K562 (cell line): ENCODE measurements at regions of chr2 and their contacts with region 1.

Region 1: GRCh38 chr2:43595603-43596412 is at the start of gene THADA:
- DNase-seq: peak; percentile 96 to 99 (median 98)
- ATAC-seq: peak; percentile 98
- H3K4me3 ChIP-seq: peak within 1 kb of the TSS; percentile 58
- H3K27ac ChIP-seq: peak within 1 kb of the TSS; percentile 99
- H3K4me1 ChIP-seq: peaks cover 4 to 10% of the 10 kb centered on the region in 2 experiments; a peak in 1 of 5 replicates
- H3K27me3 ChIP-seq: no peaks in the 10 kb centered on the region
- CTCF ChIP-seq: peak in 1 of 3 experiments; percentile 1; a peak in 1 of 6 replicates
- EP300 ChIP-seq: no peak
- POLR2A ChIP-seq: peak; percentile 99
- RAD21 ChIP-seq: no peak
- polyA plus RNA-seq, gene THADA: 17.8 to 29.6 TPM

Region 2: DNA sequence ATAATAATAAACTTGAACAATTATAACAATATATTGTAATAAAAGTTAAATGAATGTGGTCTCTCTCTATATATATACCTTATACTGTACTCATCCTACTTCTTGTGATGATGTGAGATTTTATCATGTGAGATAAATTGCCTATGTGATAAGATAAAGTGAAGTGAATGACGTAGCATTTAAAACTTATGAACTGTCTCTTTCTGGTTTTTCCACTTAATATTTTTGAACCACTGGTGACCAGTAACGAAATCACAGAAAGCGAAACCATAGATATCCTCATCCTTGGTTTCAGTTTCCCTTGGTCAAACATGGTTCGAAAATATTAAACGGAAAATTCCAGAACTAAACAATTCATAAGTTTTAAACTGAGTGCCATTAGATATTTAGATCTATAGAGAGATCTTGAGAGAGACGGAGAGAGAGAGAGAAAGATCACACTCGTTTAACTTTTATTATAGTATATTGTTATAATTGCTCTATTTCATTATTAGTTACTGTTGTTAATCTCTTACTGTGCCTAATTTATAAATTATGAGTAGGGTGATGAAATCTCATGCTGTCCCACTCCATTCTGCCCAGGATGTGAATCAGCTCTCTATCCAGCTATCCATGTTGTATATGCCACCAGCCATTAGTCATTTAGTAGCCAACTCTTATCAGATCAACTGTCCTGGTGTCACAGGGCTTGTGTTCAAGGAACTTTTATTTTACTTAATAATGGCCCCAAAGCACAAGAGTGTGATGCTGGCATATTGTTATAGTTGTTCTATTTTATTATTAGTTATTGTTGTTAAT is 156.8 kb before region 1 on chr2:
- CTCF ChIA-PET with region 1: no interaction called
- POLR2A ChIA-PET with region 1: no interaction called
- in situ Hi-C with region 1: no loop called
- intact Hi-C with region 1: no loop called
- DNase-seq: no peak
- ATAC-seq: no peak
- H3K4me3 ChIP-seq: no peak overlapping the region
- H3K27ac ChIP-seq: no peak overlapping the region
- H3K4me1 ChIP-seq: no peaks in the 10 kb centered on the region
- H3K27me3 ChIP-seq: no peaks in the 10 kb centered on the region
- CTCF ChIP-seq: no peak
- EP300 ChIP-seq: no peak
- POLR2A ChIP-seq: no peak
- RAD21 ChIP-seq: no peak

Region 3: DNA sequence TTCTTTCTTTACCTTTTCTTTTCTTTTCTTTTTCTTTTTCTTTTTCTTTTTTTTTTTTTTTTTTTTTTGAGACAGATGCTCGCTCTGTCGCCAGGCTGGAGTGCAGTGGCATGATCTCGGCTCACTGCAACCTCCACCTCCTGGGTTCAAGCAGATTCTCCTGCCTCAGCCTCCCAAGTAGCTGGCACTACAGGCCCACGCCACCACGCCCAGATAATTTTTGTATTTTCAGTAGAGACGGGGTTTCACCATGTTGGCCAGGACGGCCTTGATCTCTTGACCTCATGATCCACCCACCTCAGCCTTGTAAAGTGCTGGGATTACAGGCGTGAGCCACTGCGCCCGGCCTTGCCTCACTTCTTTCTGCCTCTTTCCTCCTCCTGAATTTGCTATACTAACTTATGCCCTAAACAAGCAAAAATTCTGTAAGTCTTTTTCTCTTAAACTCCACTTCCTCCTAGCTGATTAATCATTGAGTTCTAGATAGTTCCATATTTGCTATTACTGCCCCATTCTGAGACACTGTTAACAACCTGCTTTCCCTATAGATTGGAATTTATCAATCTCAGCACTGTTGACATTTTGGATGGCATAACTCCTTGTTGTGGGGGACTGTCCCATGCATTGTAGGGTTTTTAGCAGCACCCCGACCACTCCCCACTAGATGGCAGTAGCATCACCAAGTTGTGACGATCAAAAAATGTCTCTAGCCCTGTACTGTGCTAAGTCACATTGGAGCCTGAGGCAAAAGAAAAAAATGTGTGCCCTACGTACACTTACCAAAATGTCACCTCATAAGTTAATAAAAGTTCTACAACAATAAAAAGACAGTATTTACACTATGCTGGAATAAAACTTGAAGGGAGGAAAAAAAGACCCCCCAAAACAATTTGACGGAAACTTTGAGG is 16.4 kb after region 1 on chr2:
- CTCF ChIA-PET with region 1: interaction called, 13 read pairs
- POLR2A ChIA-PET with region 1: no interaction called
- in situ Hi-C with region 1: no loop called
- intact Hi-C with region 1: no loop called
- DNase-seq: peak; percentile 68 to 81 (median 73)
- ATAC-seq: peak; percentile 95
- H3K4me3 ChIP-seq: no peak overlapping the region
- H3K27ac ChIP-seq: no peak overlapping the region
- H3K4me1 ChIP-seq: peaks cover 0 to 2% of the 10 kb centered on the region in 2 experiments; a peak in 1 of 5 replicates
- H3K27me3 ChIP-seq: no peaks in the 10 kb centered on the region
- CTCF ChIP-seq: peak; percentile 68 to 86 (median 84)
- EP300 ChIP-seq: no peak
- POLR2A ChIP-seq: no peak
- RAD21 ChIP-seq: peak; percentile 63 to 85